ENCODE measurements at regions of chr6 and their contacts with region 1.

Region 1: GRCh38 chr6:132161283-132161682 is 210.1 kb upstream of the CCN2 start:
- DNase-seq: no peak

Region 2: GRCh38 chr6:131923356-131923755 is 237.9 kb before region 1 on chr6:
- intact Hi-C with region 1: loop called (anchors 2 kb)
- DNase-seq: no peak

Region 3: GRCh38 chr6:131949909-131950766 is 211.1 kb before region 1 on chr6:
- intact Hi-C with region 1: loop called (anchors 5 kb)
- DNase-seq: peak; percentile 81